B cell (primary cell): ENCODE measurements at regions of chr15 and their contacts with region 1.

Region 1: DNA sequence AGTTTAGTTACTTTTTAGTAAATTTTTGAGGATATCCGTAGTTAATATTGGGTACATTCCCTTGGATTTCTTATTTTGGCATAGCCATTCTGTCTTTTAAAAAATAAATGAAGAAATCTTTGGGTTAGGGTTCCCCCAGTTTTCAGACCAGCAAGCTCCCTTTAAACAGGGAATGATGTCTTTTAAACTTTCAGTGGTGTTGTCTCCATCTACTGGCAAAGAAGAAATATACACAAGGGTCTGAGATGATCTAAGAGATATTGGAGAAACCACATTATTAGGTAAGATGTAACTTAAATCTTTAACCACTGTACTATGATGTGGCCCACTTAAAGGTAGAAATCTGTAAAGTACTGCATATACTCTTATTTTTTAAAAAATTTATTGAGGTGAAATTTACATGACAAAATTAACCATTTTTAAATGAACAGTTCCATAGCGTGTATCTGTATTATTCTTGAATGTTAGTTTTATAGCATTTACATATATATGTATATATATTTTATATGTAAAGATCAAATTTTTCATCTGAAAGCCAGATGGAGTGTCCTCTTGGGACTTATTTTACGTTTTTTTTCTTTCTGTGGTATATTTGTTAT is 35.1 kb upstream of the EIF3J start:
- DNase-seq: peak; percentile 43
- ATAC-seq: peak; percentile 28
- H3K4me3 ChIP-seq: no peak overlapping the region
- H3K4me3 Mint-ChIP-seq: no peak overlapping the region
- H3K27ac ChIP-seq: no peak overlapping the region
- H3K27ac Mint-ChIP-seq: no peak overlapping the region
- H3K4me1 ChIP-seq: no peaks in the 10 kb centered on the region
- H3K4me1 Mint-ChIP-seq: peaks cover 2% of the 10 kb centered on the region
- H3K27me3 ChIP-seq: no peaks in the 10 kb centered on the region
- H3K27me3 Mint-ChIP-seq: no peaks in the 10 kb centered on the region
- CTCF ChIP-seq: peak; percentile 74

Region 2: DNA sequence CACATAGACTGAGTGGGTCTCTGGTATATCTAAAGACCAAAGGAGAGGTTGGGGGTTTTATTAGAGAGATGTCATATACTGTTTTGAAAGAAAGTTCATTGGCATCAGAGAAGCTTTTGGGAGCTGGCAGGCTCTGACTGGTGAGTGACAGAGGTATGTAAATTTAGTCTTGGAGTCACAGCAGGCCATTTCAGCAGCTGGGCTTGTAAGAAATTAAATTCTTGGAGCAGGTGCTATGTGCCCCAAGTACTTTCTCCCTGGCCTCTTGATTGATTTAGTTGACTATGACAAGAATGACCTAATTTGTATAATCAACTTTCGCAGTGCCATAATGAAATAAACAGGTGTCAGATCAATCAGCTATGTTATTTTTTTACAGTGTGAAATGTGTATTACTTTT is 1717.2 kb before region 1 on chr15:
- CTCF ChIA-PET with region 1: no interaction called
- POLR2A ChIA-PET with region 1: no interaction called
- intact Hi-C with region 1: no loop called
- DNase-seq: no peak
- ATAC-seq: no peak
- H3K4me3 ChIP-seq: no peak overlapping the region
- H3K4me3 Mint-ChIP-seq: no peak overlapping the region
- H3K27ac ChIP-seq: no peak overlapping the region
- H3K27ac Mint-ChIP-seq: no peak overlapping the region
- H3K4me1 ChIP-seq: no peaks in the 10 kb centered on the region
- H3K4me1 Mint-ChIP-seq: no peaks in the 10 kb centered on the region
- H3K27me3 ChIP-seq: no peaks in the 10 kb centered on the region
- H3K27me3 Mint-ChIP-seq: no peaks in the 10 kb centered on the region
- CTCF ChIP-seq: no peak

Region 3: GRCh38 chr15:44265757-44266156 is 236.1 kb before region 1 on chr15:
- CTCF ChIA-PET with region 1: interaction called, 6 read pairs
- POLR2A ChIA-PET with region 1: no interaction called
- intact Hi-C with region 1: loop called (anchors 5 kb)
- DNase-seq: peak; percentile 10
- ATAC-seq: no peak
- H3K4me3 ChIP-seq: no peak overlapping the region
- H3K4me3 Mint-ChIP-seq: no peak overlapping the region
- H3K27ac ChIP-seq: no peak overlapping the region
- H3K27ac Mint-ChIP-seq: no peak overlapping the region
- H3K4me1 ChIP-seq: no peaks in the 10 kb centered on the region
- H3K4me1 Mint-ChIP-seq: no peaks in the 10 kb centered on the region
- H3K27me3 ChIP-seq: peaks cover 0 to 4% (median 0%) of the 10 kb centered on the region in 4 experiments
- H3K27me3 Mint-ChIP-seq: peaks cover 2% of the 10 kb centered on the region
- CTCF ChIP-seq: no peak

Region 4: DNA sequence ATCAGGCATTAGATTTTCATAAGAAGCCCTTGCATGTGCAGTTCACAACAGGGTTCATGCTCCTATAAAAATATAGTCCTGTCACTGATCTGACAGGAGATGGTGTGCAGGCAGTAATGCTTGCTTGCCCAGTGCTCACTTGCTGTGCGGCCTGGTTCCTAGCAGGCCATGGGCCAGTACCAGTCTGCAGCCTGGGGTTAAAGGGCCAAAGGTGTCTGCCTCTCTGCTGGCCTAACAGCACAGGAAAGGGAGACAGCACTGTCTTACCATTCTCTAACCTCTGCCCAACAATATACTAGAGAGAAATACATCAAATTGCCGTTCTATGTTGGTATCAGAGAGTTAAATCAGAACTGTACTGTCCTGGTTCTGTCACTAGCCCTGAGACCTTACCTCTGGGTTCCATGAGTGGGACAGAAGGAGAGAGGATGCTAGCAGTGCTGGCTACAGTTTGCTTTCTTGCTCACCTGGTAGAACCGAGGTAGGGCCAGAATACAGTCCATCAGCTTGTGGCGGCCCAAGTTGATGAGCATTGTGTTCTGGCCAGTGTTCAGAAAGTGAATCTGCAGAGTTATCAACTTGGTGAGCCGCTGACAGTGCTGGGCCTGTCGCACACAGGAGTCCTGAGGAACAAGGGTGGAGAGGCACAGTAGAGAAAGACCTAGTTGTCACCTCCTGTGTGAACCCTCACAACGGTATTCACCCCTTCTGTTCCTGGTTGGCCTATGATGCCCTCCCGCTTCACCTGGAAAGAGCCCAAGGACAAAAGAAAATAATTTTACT is 63.7 kb after region 1 on chr15:
- CTCF ChIA-PET with region 1: no interaction called
- POLR2A ChIA-PET with region 1: no interaction called
- intact Hi-C with region 1: no loop called
- DNase-seq: no peak
- ATAC-seq: no peak
- H3K4me3 ChIP-seq: no peak overlapping the region
- H3K4me3 Mint-ChIP-seq: no peak overlapping the region
- H3K27ac ChIP-seq: no peak overlapping the region
- H3K27ac Mint-ChIP-seq: no peak overlapping the region
- H3K4me1 ChIP-seq: no peaks in the 10 kb centered on the region
- H3K4me1 Mint-ChIP-seq: no peaks in the 10 kb centered on the region
- H3K27me3 ChIP-seq: no peaks in the 10 kb centered on the region
- H3K27me3 Mint-ChIP-seq: no peaks in the 10 kb centered on the region
- CTCF ChIP-seq: no peak